ENCODE measurements at regions of chr11 and their contacts with region 1.

Region 1: GRCh38 chr11:73177778-73178577 is 35.9 kb upstream of the FCHSD2 start:
- DNase-seq: peak; percentile 88
- H3K4me3 Mint-ChIP-seq: no peak overlapping the region
- H3K27ac Mint-ChIP-seq: no peak overlapping the region
- H3K4me1 Mint-ChIP-seq: no peaks in the 10 kb centered on the region
- H3K27me3 Mint-ChIP-seq: no peaks in the 10 kb centered on the region
- CTCF ChIP-seq: peak; percentile 79

Region 2: DNA sequence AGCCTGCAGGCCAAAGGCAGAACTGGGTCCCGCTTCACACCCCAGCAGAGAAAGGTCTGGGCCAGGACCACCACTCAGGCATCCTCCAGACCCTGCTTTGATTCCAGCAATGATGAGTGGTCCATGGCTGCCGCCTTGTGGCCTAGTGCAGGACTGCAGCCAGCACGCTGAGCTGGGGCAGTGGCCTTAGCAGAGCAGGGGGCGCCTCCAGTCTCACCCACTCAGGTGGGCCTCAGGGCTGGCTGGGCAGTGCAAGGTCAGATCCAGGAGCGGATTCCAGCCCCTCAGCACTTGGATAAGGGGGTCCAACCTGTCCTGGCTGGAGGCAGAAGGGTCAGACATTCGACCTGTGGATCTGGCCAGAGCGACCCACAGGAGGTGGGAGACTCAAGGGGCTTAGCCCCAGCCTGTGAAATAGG is 494.2 kb before region 1 on chr11:
- CTCF ChIA-PET with region 1: interaction called, 3 read pairs
- POLR2A ChIA-PET with region 1: no interaction called
- intact Hi-C with region 1: loop called (anchors 1 kb)
- DNase-seq: peak; percentile 46
- H3K4me3 Mint-ChIP-seq: no peak overlapping the region
- H3K27ac Mint-ChIP-seq: no peak overlapping the region
- H3K4me1 Mint-ChIP-seq: no peaks in the 10 kb centered on the region
- H3K27me3 Mint-ChIP-seq: peaks cover 14% of the 10 kb centered on the region
- CTCF ChIP-seq: peak; percentile 92

Region 3: DNA sequence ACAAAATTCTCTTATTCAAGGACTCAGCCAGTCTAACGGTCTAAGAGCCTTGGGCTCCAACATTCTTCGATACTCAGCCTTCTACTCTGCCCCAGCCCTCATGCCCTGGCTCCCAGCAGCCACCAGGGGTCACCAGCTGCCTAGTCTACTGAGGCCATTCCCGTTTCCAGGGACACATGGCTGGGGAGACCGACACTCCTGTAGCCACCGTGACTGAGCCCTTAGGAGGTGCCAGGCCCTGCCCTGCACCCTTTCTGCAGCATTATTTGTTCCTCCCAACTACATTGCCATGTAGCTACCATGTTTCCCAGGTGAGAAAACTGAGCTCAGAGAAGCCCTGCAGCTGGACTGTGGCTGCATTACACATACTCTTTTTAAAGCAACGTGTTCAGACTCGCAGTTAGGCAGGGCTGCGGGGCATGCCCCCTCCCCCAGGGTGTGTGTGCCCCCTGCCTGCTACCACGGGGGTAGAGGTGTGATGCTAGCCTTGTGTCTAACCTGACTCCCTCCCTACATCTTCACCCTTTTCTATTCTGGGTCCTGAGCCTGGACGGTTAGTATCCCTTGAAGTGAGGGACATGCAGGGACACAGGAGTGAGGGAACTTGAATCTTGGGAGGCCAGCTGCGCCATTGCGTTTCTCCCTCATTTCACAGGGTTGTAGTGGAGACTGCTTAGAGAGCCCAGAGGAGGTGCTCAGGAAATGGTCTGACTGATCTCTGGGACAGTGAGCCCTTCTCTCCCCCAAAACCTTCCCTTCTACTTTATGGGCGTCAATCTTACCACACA is 346.3 kb before region 1 on chr11:
- CTCF ChIA-PET with region 1: interaction called, 153 read pairs
- POLR2A ChIA-PET with region 1: interaction called, 15 read pairs
- intact Hi-C with region 1: loop called (anchors 1 kb)
- DNase-seq: peak; percentile 82
- H3K4me3 Mint-ChIP-seq: no peak overlapping the region
- H3K27ac Mint-ChIP-seq: no peak overlapping the region
- H3K4me1 Mint-ChIP-seq: peaks cover 9% of the 10 kb centered on the region
- H3K27me3 Mint-ChIP-seq: no peaks in the 10 kb centered on the region
- CTCF ChIP-seq: peak; percentile 93

Region 4: DNA sequence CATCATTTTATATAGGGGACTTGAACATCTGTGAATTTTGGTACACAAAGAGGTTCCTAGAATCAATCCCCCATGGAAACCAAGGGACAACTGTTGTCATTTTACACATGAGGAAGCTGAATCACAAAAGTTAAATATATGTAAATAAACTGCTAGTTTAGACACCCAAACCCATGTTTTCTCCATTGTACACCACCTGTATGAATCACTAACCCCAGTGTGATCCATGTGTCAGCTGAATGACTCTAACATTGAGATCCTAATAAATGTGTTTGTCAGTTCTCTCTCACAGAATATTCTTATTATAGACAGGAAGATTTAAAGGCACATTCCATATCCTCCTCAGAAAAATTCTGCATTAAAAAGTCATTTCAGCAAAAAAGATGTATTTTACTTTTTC is 280.5 kb before region 1 on chr11:
- CTCF ChIA-PET with region 1: no interaction called
- POLR2A ChIA-PET with region 1: no interaction called
- intact Hi-C with region 1: no loop called
- DNase-seq: no peak
- H3K4me3 Mint-ChIP-seq: no peak overlapping the region
- H3K27ac Mint-ChIP-seq: no peak overlapping the region
- H3K4me1 Mint-ChIP-seq: no peaks in the 10 kb centered on the region
- H3K27me3 Mint-ChIP-seq: no peaks in the 10 kb centered on the region
- CTCF ChIP-seq: no peak

Region 5: DNA sequence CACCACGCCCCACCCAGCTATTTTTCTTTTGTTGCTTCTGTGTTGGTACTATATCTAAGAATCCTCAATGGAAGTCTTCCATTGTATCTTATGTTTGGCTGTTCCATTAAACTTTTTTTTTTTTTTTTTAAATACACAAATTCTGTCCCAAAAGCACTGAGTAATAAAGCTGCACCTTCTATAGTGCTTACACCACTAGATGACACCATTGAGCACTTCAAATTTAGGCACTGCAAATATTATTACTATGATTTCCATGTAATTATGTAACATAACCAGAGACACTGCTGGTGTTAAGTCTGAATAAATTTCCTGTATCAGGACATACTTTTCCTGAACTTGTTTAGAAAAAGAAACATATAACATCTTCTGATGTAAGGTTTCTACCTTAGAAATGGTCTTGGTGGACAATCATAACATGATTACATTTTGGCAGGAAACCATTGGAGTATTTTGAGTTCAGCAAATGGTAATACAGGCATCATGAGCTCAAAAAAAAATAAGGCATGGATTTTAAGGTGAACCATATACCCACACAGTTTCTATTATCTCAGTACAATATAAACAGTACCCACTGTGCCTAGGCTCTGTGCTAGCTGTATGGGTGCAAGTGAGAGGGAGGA is 253.3 kb before region 1 on chr11:
- CTCF ChIA-PET with region 1: interaction called, 70 read pairs
- POLR2A ChIA-PET with region 1: interaction called, 8 read pairs
- intact Hi-C with region 1: loop called (anchors 1 kb)
- DNase-seq: peak; percentile 44
- H3K4me3 Mint-ChIP-seq: no peak overlapping the region
- H3K27ac Mint-ChIP-seq: no peak overlapping the region
- H3K4me1 Mint-ChIP-seq: no peaks in the 10 kb centered on the region
- H3K27me3 Mint-ChIP-seq: no peaks in the 10 kb centered on the region
- CTCF ChIP-seq: peak; percentile 55

Region 6: DNA sequence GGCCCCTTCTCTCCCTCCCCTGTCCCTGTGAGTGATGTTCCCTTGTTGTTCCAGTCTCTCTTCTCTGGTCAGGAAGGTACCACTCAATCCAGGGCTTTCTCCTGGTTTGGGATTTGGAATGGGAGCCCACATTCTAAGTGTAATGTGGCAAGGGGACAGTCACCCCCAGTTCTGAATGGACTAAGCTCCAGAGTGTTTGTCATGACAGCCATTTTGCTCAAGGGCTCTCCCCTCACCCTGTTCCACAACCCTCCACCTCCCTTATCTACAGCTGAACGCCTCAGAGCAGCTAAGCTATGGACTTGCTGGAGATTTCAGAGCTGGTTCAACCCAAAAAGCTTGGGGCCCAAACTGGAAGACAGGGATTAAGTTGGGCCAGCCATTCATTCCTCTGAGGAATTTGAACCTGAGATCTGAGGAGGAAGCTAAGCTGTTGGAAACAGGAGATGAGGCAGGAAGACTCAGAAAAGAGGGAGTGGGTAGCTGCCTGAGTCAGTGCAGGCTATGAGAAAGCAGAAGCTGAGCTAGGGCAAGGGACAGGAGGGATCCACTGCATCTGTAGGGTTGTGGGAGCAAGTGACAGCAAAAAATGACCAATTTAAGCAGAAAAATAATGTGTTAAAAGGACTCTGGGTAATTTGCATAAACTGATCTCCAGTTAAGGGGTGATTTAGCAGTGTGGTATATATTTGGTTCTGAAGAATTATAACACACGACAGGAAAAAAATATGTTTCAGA is 13.0 kb before region 1 on chr11:
- CTCF ChIA-PET with region 1: interaction called, 27 read pairs
- POLR2A ChIA-PET with region 1: interaction called, 7 read pairs
- intact Hi-C with region 1: no loop called
- DNase-seq: no peak
- H3K4me3 Mint-ChIP-seq: no peak overlapping the region
- H3K27ac Mint-ChIP-seq: no peak overlapping the region
- H3K4me1 Mint-ChIP-seq: no peaks in the 10 kb centered on the region
- H3K27me3 Mint-ChIP-seq: no peaks in the 10 kb centered on the region
- CTCF ChIP-seq: no peak

Region 7: DNA sequence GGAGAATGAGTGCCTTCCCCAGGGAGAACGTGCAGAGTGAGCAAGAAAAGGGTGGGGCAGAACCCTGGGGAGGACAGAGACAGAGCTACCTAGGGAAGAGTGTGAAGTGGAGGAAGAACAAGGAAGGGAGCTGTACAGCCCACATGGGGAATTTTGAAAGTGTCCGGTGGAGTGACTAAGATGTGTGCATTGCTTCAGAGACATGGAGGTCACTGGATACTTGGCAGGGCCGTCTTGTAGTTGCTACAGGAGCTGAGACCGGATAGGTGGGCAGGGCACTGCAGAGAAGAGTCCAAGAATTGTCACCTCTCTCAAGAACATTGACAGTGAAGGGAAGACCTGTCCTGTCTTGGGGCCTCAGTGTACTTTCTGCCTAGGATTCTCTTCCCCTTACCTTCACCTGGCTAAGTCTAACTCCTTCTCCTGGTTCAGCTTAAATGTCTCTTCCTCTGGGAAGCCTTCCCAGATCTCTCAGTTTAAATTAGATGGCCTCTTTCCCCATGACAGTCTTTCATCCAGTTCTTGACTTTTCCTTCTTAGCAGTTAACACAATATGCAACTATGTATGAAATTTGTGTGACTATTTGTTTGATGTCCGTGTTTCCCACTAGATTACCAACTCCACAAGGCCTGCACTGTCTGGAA is 85.0 kb after region 1 on chr11:
- CTCF ChIA-PET with region 1: interaction called, 12 read pairs
- POLR2A ChIA-PET with region 1: no interaction called
- intact Hi-C with region 1: no loop called
- DNase-seq: peak; percentile 77
- H3K4me3 Mint-ChIP-seq: no peak overlapping the region
- H3K27ac Mint-ChIP-seq: no peak overlapping the region
- H3K4me1 Mint-ChIP-seq: peaks cover 6% of the 10 kb centered on the region
- H3K27me3 Mint-ChIP-seq: peaks cover 22% of the 10 kb centered on the region
- CTCF ChIP-seq: no peak

Region 8: GRCh38 chr11:73307323-73308002 is 129.5 kb after region 1 on chr11:
- CTCF ChIA-PET with region 1: no interaction called
- POLR2A ChIA-PET with region 1: no interaction called
- intact Hi-C with region 1: no loop called
- DNase-seq: peak; percentile 97
- H3K4me3 Mint-ChIP-seq: peak overlapping the region; percentile 73
- H3K27ac Mint-ChIP-seq: peak overlapping the region; percentile 6
- H3K4me1 Mint-ChIP-seq: peaks cover 21% of the 10 kb centered on the region
- H3K27me3 Mint-ChIP-seq: no peaks in the 10 kb centered on the region
- CTCF ChIP-seq: peak; percentile 80

Measured in MCF 10A (cell line).